GM13977 (cell line): ENCODE measurements at regions of chr20 and their contacts with region 1.

Region 1: GRCh38 chr20:18632196-18633009 is 44.5 kb downstream of the DTD1 start:
- DNase-seq: peak; percentile 52
- CTCF ChIP-seq: peak; percentile 99

Region 2: DNA sequence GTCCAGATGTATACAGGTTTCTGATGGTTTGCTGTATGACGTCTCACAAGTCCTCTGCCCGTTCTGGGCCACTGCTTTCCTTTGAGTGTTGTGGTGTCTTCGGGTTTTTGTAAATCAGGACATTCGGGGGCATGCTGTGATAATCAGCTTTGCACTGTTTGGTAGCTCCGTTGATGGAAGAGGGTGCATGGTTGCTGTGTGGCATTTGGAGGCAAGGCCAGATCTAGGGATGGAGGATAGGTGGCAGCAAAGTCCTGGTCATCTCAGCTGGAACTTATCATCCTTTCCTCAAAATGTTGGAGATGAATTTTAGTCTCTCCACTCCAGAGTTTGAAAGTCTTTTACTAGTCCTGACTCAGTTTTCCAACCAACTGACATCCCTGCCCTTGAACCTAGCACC is 272.2 kb after region 1 on chr20:
- in situ Hi-C with region 1: loop called (anchors 25 kb)
- DNase-seq: no peak
- CTCF ChIP-seq: peak; percentile 32

Region 3: GRCh38 chr20:19074828-19075516 is 442.6 kb after region 1 on chr20:
- in situ Hi-C with region 1: loop called (anchors 25 kb)
- DNase-seq: peak; percentile 25
- CTCF ChIP-seq: no peak